Left colon (tissue), 2 donors: ENCODE measurements at regions of chr5 and their contacts with region 1.

Region 1: GRCh38 chr5:17216176-17216973 is 1.1 kb upstream of the BASP1 start:
- DNase-seq: peak; percentile 60 to 87
- ATAC-seq: peak; percentile 81

Region 2: DNA sequence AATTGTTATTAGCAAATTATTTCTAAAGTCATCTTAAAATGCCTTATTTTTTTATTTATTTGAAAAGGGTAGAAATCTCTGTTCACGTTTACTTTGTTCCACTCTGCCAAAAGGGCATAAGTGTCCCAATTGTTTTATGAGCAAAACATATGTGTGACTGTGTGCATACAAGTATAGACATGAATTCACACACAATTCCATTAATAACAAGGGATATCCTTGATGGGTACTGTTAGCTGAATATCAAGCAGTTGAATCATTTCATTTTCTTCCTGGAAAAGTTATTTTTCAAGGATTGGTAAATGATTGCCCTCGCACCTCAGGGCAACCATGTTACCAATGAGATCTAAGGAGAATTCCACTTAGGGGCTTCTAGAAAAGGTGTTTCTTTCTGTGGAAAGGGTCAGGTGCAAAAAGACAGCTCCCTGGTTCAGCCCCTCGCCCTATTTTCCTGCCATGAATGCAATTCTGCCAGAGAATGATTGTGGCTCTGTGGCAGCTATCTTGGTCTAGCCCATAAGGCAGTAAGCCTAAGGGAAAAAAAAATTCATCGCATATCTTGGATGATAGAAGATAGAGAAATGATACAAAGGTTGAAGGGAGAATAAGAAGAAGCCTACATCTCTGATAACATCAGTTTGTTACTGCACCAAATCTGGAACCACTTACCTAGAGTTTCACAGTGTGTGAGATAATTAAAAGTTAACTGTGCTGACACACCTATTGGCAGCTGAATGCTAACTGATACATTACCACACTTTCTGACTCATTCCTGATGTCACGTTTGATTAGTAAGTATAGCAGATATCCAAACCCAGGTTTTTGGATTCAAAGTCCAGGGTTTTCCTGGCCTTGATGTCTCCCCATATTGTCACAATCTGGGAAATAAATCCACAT is 189.8 kb after region 1 on chr5:
- intact Hi-C with region 1: no loop called
- DNase-seq: no peak
- ATAC-seq: peak; percentile 46

Region 3: GRCh38 chr5:18281682-18282557 is 1065.5 kb after region 1 on chr5:
- intact Hi-C with region 1: loop called in 1 of 2 experiments (anchors 10 kb)
- DNase-seq: no peak
- ATAC-seq: no peak

Region 4: GRCh38 chr5:18314192-18314778 is 1097.9 kb after region 1 on chr5:
- intact Hi-C with region 1: loop called (anchors 10 kb)
- DNase-seq: no peak
- ATAC-seq: no peak